Gastrocnemius medialis (tissue), 4 donors: ENCODE measurements at regions of chr4 and their contacts with region 1.

Region 1: DNA sequence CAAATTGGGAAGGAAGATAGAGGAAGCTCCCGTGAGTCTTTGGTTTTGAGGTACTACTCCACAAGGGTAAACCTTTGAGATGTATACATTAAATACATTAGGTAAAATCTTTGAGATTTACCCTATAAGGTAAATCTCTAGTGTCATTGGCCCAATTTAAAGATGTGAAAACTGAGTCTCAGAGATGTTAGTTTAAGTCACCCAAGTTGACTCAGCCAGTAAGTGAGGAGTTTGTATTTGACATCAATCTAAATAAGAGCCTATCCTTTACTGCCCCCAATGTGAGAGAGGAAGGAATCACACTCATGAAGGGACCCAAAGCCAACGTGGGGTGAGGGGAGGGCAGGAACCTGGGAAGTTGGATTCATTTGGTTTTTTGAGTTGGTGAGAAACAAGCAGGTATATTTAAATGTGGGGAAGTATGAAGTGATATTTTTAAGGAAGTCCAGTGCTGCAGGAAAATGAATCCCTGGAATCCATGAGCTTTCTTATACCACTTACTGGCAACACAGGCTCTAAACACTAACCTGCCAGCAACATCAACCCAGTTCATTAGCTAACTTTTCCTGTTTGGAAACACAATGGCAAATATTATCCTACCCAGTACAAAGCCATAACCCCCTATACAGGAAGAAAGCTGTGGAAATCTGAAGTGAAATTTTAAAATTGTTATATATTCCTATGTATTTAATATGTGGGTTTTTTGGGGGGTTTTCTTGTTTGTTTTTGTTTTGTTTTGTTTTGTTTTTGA is 55.3 kb downstream of the PALLD start:
- DNase-seq: no peak
- ATAC-seq: peak; percentile 60 to 71
- H3K4me3 ChIP-seq: no peak overlapping the region
- H3K27ac ChIP-seq: peak overlapping the region in 1 of 4 donors; percentile 25
- H3K4me1 ChIP-seq: peaks cover 11 to 13% of the 10 kb centered on the region in 2 donors
- H3K27me3 ChIP-seq: no peaks in the 10 kb centered on the region
- CTCF ChIP-seq: no peak
- POLR2A ChIP-seq: no peak

Region 2: GRCh38 chr4:168098257-168098717 is 453.8 kb before region 1 on chr4:
- in situ Hi-C with region 1: no loop called
- intact Hi-C with region 1: no loop called
- DNase-seq: no peak
- ATAC-seq: no peak
- H3K4me3 ChIP-seq: no peak overlapping the region
- H3K27ac ChIP-seq: no peak overlapping the region
- H3K4me1 ChIP-seq: no peaks in the 10 kb centered on the region
- H3K27me3 ChIP-seq: no peaks in the 10 kb centered on the region
- CTCF ChIP-seq: no peak
- POLR2A ChIP-seq: no peak

Region 3: GRCh38 chr4:168183717-168184608 is 368.2 kb before region 1 on chr4:
- in situ Hi-C with region 1: no loop called
- intact Hi-C with region 1: loop called (anchors 5 kb)
- DNase-seq: no peak
- ATAC-seq: peak in 1 of 2 donors; percentile 19
- H3K4me3 ChIP-seq: no peak overlapping the region
- H3K27ac ChIP-seq: no peak overlapping the region
- H3K4me1 ChIP-seq: no peaks in the 10 kb centered on the region
- H3K27me3 ChIP-seq: no peaks in the 10 kb centered on the region
- CTCF ChIP-seq: peak in 4 of 5 experiments; percentile 44 to 72 (median 65)
- POLR2A ChIP-seq: no peak

Region 4: GRCh38 chr4:168318266-168318895 is 233.7 kb before region 1 on chr4 and contains the start of gene DDX60:
- in situ Hi-C with region 1: no loop called
- intact Hi-C with region 1: loop called (anchors 10 kb)
- DNase-seq: peak; percentile 23 to 57
- ATAC-seq: peak; percentile 81 to 96
- H3K4me3 ChIP-seq: peak within 1 kb of the TSS; percentile 73 to 95 (median 92)
- H3K27ac ChIP-seq: peak within 1 kb of the TSS; percentile 86 to 88 (median 87)
- H3K4me1 ChIP-seq: peaks cover 0 to 8% of the 10 kb centered on the region in 2 donors
- H3K27me3 ChIP-seq: no peaks in the 10 kb centered on the region
- CTCF ChIP-seq: peak in 4 of 5 experiments; percentile 11 to 64 (median 41)
- POLR2A ChIP-seq: no peak
- total RNA-seq, gene DDX60: 1.6 to 12.1 (median 3.6) TPM

Region 5: GRCh38 chr4:168408620-168409019 is 143.5 kb before region 1 on chr4:
- in situ Hi-C with region 1: no loop called
- intact Hi-C with region 1: loop called (anchors 10 kb)
- DNase-seq: peak; percentile 71 to 74
- ATAC-seq: peak; percentile 98
- H3K4me3 ChIP-seq: peak overlapping the region in 1 of 4 donors; percentile 3
- H3K27ac ChIP-seq: peak overlapping the region; percentile 69 to 72 (median 71)
- H3K4me1 ChIP-seq: peaks cover 28 to 39% of the 10 kb centered on the region in 2 donors
- H3K27me3 ChIP-seq: no peaks in the 10 kb centered on the region
- CTCF ChIP-seq: no peak
- POLR2A ChIP-seq: peak in 1 of 2 donors; percentile 23

Region 6: GRCh38 chr4:168514249-168514852 is 37.8 kb before region 1 on chr4:
- in situ Hi-C with region 1: no loop called
- intact Hi-C with region 1: loop called (anchors 5 kb)
- DNase-seq: no peak
- ATAC-seq: no peak
- H3K4me3 ChIP-seq: no peak overlapping the region
- H3K27ac ChIP-seq: peak overlapping the region in 1 of 4 donors; percentile 49
- H3K4me1 ChIP-seq: peaks cover 11 to 33% of the 10 kb centered on the region in 2 donors
- H3K27me3 ChIP-seq: no peaks in the 10 kb centered on the region
- CTCF ChIP-seq: peak; percentile 30 to 55 (median 38)
- POLR2A ChIP-seq: no peak